ENCODE measurements at regions of chr7 and their contacts with region 1.

Region 1: GRCh38 chr7:122528879-122529481 is 169.9 kb downstream of the RNF133 start:
- DNase-seq: peak; percentile 19
- CTCF ChIP-seq: peak; percentile 43

Region 2: GRCh38 chr7:122092964-122093797 is 435.8 kb before region 1 on chr7:
- CTCF ChIA-PET with region 1: interaction called, 18 read pairs
- POLR2A ChIA-PET with region 1: no interaction called
- DNase-seq: peak; percentile 39
- CTCF ChIP-seq: peak; percentile 84

Region 3: GRCh38 chr7:122137251-122138077 is 391.5 kb before region 1 on chr7:
- CTCF ChIA-PET with region 1: no interaction called
- POLR2A ChIA-PET with region 1: no interaction called
- DNase-seq: no peak
- CTCF ChIP-seq: no peak

Region 4: DNA sequence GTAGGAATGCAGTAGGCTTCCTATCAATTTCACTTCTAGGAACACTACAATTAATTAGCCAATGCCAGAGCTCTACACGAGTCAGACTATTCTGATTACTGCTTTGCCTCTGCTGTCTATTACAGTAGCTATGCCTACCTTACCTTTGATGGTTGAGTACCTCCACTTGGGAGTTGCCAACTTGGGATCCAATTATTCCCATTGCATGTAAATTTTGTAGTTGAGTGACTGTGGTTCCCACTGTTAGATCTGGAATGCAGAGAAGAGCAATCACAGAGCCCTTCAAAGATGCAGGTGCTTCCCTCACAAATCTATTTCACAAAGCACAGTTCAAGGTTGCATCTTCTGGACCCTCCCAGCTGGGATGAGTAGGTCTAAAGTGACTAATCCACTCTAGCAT is 322.0 kb before region 1 on chr7:
- CTCF ChIA-PET with region 1: no interaction called
- POLR2A ChIA-PET with region 1: no interaction called
- DNase-seq: no peak
- CTCF ChIP-seq: no peak

Region 5: DNA sequence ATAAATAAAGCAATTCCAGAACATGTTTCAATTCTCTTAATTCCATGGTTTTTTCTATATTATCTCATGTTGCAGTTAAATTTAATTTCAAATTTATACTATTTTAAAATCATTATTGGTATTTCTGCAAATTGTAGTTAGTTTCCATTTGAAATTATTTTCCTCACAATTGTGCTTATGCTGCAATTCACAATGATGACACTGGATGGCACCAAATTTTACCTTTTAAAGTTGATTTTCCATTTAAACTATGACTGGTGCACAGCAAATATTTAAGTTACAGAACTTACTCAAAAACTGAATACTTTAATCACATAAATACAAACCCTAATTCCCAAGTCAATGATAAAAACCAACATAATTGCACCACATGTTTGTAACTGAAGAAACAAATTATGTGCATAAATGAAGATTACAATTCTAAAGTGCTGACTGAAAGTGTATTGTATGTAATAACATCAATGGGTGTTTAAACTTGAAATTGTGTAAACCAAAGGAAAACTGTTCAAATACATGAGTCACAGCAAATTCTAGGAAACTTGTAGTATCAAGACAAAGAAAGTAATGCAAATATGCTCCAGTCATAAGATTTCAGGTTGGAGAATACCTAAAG is 309.6 kb before region 1 on chr7:
- CTCF ChIA-PET with region 1: interaction called, 38 read pairs
- POLR2A ChIA-PET with region 1: no interaction called
- DNase-seq: no peak
- CTCF ChIP-seq: peak; percentile 64

Region 6: DNA sequence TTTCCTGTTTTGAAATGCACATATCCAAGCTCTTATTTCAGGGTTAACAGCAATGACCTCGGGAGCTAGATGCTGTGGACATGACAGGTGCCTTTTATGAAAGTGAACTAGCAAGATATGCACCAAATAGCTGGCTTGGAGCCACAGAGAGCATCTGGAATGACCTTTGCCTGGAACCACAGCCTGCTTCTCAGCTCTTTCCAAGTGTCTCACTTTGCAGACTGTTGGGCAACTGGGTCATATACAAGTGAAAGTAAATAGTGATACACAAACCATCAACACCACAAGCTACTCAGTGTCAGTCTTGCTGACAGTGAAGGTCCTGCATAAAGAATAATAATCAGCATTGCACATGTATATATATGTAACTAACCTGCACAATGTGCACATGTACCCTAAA is 13.6 kb before region 1 on chr7:
- CTCF ChIA-PET with region 1: interaction called, 11 read pairs
- POLR2A ChIA-PET with region 1: no interaction called
- DNase-seq: no peak
- CTCF ChIP-seq: no peak

Region 7: DNA sequence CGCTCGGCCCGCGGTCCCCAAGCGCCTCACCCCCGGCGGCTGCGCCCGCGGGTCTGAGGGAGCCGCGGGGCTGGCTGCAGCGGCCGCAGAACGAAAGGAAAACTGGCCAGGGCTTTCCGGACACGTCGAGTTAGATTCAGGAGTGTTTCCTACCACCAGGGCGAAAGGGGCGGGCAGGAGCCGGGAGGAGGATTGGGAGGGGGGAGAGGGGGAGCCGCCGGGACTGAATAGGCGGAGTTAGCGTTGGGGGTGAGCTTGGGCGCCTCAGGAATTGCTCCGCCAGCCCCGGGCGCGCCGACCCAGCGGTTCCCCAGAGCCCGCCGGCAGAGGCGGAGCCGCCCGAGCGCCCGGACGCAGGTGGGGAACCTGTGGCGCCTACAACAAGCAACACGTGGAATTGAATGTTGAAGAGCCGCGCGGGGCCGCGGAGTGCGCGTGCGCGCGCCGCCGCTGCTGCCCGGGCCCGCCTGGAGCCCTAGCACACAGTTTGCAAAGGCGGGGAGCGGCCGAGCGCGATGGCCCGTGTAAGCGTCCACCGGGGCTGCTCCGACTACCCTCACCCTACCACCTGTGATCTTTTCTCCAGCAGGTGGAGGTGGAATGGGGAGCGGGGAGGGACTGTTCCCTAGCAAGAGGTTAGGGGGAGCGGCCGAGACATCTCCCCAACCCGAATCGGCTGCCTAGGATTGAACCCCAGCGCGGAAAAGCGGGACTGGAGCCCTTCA is 357.5 kb after region 1 on chr7 and contains the start of gene CADPS2:
- CTCF ChIA-PET with region 1: no interaction called
- POLR2A ChIA-PET with region 1: no interaction called
- DNase-seq: peak; percentile 61
- CTCF ChIP-seq: no peak

Measured in GM10248 (cell line).